ENCODE measurements at regions of chr2 and their contacts with region 1.

Region 1: DNA sequence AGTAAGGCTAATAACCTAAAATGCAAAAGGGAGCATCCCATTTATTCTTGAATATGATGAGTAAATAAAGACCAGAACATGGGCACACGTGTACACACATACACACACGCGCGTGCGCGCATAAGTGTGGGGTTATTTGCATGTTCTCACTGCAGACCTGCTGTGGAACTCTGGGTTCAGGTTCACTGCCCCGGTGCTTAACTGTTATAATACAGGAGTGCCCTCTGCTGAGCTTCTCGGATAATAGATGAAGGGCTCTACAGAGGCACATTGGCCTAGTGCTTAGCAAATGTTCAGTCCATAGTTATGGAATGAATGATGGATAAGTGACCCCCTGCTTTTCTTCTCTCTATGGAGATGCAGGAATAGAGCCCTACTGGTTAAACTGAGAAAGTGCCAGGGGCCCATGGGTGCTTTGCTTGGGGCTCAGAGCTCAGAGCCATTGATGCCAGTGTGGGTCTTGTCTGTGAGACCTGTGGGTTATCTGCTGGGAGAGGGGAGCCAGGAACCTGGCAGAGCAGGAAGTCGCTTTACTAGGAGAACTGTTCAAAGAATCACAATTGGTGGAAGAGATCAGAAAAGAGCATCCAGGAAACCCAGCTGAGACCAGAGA is 3.6 kb upstream of the ARL4C start:
- DNase-seq: peak in 4 of 5 donors; percentile 34 to 55 (median 42)
- ATAC-seq: peak; percentile 49 to 72 (median 58)
- H3K4me3 ChIP-seq: no peak overlapping the region
- H3K27ac ChIP-seq: no peak overlapping the region
- H3K4me1 ChIP-seq: peaks cover under 1 to 14% (median 9%) of the 10 kb centered on the region in 12 donors
- H3K27me3 ChIP-seq: peaks cover 0 to 8% (median 3%) of the 10 kb centered on the region in 9 donors
- CTCF ChIP-seq: peak; percentile 40 to 73 (median 58)
- POLR2A ChIP-seq: no peak

Region 2: DNA sequence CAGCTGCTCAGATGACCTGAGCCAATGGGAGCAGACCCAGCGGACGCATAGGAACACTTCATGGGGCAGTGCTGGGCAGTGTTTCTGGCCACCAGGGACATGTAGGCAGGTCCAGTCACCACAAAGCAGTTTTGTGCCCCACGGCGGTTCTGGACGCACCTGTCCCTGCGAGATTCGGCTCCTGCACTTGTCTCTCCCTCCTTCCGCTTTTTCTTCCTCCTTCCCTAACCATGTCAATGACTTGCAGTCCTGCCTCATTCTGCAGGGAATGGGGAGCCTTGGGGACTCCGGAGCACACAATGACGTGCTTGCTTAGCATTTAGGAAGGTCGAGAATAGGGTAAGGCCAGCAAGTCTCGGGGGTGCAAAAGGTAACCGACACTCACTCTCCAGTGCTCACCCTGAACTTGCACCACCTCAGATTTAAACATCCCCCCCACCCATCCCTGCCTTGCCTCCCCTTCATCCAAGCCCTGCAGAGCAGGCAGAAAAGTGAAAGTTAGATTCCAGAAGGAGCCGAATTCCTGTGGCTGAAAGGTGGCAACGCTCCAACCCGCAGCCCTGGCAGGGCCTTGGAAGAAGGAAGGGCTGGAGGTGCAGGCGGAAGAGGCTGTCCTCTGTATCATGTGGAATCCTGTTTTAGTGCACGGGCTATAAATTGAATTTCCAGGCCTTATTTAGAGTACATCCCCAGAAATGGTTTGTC is 1289.5 kb before region 1 on chr2:
- intact Hi-C with region 1: no loop called
- DNase-seq: peak; percentile 79 to 89 (median 79)
- ATAC-seq: peak; percentile 77 to 88 (median 86)
- H3K4me3 ChIP-seq: peak overlapping the region in 8 of 12 donors; percentile 6 to 44 (median 26)
- H3K27ac ChIP-seq: peak overlapping the region in 10 of 12 donors; percentile 2 to 60 (median 48)
- H3K4me1 ChIP-seq: peaks cover 4 to 39% (median 18%) of the 10 kb centered on the region in 12 donors
- H3K27me3 ChIP-seq: no peaks in the 10 kb centered on the region
- CTCF ChIP-seq: no peak
- POLR2A ChIP-seq: no peak

Region 3: GRCh38 chr2:234288974-234289455 is 211.5 kb before region 1 on chr2:
- intact Hi-C with region 1: loop called (anchors 1 to 5 kb)
- DNase-seq: peak; percentile 53 to 75 (median 57)
- ATAC-seq: peak in 3 of 4 donors; percentile 38 to 54 (median 38)
- H3K4me3 ChIP-seq: no peak overlapping the region
- H3K27ac ChIP-seq: peak overlapping the region in 1 of 12 donors; percentile 87
- H3K4me1 ChIP-seq: peaks cover 0 to 62% (median 10%) of the 10 kb centered on the region in 12 donors
- H3K27me3 ChIP-seq: no peaks in the 10 kb centered on the region
- CTCF ChIP-seq: peak; percentile 65 to 80 (median 72)
- POLR2A ChIP-seq: no peak

Region 4: DNA sequence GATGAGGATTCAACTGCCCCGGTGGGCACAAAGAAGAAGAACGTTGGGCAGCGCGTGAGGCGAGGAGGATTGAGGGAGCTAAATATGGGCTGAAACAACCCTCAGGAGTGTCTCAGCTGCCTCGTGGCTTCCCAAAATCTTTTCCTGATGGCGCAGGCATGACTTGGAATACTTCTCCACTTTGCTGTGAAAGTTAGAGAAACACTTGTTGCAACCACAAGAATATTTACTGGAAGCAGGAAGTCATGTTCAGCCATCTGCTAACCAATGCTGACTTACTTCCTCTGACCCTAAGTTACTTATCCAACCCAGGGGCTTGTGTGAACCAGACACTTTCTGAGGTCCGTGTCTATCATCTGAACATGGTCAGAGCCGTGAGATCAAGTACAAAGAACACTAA is 152.4 kb before region 1 on chr2:
- intact Hi-C with region 1: loop called in 1 of 10 experiments (anchors 10 kb)
- DNase-seq: peak in 3 of 5 donors; percentile 27 to 47 (median 32)
- ATAC-seq: peak in 3 of 4 donors; percentile 36 to 90 (median 45)
- H3K4me3 ChIP-seq: no peak overlapping the region
- H3K27ac ChIP-seq: peak overlapping the region in 2 of 12 donors; percentile 41 to 65
- H3K4me1 ChIP-seq: peaks cover 0 to 14% (median 0%) of the 10 kb centered on the region in 12 donors
- H3K27me3 ChIP-seq: no peaks in the 10 kb centered on the region
- CTCF ChIP-seq: no peak
- POLR2A ChIP-seq: no peak

Region 5: GRCh38 chr2:234437642-234438304 is 62.7 kb before region 1 on chr2:
- intact Hi-C with region 1: loop called in 2 of 10 experiments (anchors 5 to 10 kb)
- DNase-seq: peak in 3 of 5 donors; percentile 30 to 42 (median 39)
- ATAC-seq: peak; percentile 22 to 73 (median 65)
- H3K4me3 ChIP-seq: no peak overlapping the region
- H3K27ac ChIP-seq: peak overlapping the region in 2 of 12 donors; percentile 3 to 26
- H3K4me1 ChIP-seq: peaks cover 0 to 33% (median 20%) of the 10 kb centered on the region in 12 donors
- H3K27me3 ChIP-seq: no peaks in the 10 kb centered on the region
- CTCF ChIP-seq: no peak
- POLR2A ChIP-seq: no peak

Region 6: DNA sequence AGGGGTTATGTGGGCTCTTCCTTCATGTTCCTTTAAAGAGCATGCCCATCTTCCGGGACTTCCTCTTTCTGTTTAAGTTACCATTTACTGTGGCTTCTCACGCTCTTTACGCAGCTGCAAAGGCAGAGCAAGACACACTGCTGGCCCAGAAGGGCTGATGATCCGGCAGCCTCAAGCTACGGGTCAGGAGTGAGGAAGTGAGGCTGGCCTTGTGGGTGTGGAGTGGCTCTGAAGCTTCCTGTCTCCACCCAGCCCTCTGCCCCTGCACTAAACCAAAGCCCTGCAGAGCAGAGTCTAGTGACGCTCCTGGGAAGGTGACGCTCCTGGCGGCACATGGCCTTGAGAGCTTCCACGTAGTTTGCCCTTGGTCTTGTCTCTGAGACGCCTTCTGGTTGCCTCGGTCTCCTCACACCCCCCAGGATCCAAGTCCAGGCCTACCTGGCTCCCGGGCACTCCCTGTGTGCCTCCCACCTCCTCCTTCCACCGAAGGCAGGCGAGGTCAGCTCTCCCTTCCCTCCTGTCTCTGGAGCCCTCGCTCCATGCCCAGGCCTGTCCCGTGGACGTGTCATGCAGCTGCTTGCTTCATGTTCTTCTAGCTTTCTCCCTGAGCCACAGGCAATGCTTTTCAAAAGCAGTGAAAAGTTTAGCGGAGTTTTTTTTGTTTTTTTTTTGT is 54.0 kb before region 1 on chr2:
- intact Hi-C with region 1: loop called in 2 of 10 experiments (anchors 5 to 10 kb)
- DNase-seq: peak; percentile 74 to 85 (median 77)
- ATAC-seq: peak; percentile 73 to 97 (median 92)
- H3K4me3 ChIP-seq: no peak overlapping the region
- H3K27ac ChIP-seq: peak overlapping the region in 9 of 12 donors; percentile 18 to 92 (median 47)
- H3K4me1 ChIP-seq: peaks cover 0 to 41% (median 10%) of the 10 kb centered on the region in 12 donors
- H3K27me3 ChIP-seq: no peaks in the 10 kb centered on the region
- CTCF ChIP-seq: no peak
- POLR2A ChIP-seq: no peak

Region 7: DNA sequence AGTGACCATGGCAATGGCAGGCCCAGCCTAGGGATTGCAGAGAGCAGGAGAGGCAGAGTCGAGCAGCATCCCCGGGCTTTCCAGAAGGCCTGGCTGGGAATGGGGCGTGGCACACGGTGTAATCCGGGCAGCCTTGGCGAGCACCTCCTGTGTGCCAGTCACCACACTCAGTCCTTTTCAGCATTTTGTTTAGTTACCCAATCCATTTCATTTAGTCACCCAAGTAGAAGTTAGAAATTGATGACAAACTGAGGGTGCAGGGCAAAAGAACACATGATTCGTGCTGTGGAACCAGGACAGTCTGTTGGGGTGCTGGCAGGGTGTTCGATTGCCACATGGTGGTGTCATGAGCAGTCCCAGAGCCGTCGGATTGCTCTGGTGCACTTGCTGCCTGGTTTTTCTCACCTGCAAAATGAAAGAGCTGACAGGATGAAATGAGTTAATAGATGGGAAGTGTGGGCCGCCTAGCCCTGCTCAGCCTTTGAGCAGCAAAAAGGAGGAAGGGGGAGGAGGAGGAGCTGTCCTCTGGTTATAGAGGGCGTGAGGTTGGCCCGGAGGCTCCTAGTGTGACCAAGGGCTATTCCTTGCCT is 1292.8 kb after region 1 on chr2:
- intact Hi-C with region 1: no loop called
- DNase-seq: peak in 2 of 5 donors; percentile 56 to 61
- ATAC-seq: peak; percentile 79 to 94 (median 88)
- H3K4me3 ChIP-seq: no peak overlapping the region
- H3K27ac ChIP-seq: no peak overlapping the region
- H3K4me1 ChIP-seq: peaks cover 0 to 7% (median 0%) of the 10 kb centered on the region in 12 donors
- H3K27me3 ChIP-seq: no peaks in the 10 kb centered on the region
- CTCF ChIP-seq: peak in 10 of 12 donors; percentile 10 to 51 (median 32)
- POLR2A ChIP-seq: no peak

Measured in heart left ventricle (tissue), 16 donors.